ENCODE measurements at regions of chr5 and their contacts with region 1.

Region 1: DNA sequence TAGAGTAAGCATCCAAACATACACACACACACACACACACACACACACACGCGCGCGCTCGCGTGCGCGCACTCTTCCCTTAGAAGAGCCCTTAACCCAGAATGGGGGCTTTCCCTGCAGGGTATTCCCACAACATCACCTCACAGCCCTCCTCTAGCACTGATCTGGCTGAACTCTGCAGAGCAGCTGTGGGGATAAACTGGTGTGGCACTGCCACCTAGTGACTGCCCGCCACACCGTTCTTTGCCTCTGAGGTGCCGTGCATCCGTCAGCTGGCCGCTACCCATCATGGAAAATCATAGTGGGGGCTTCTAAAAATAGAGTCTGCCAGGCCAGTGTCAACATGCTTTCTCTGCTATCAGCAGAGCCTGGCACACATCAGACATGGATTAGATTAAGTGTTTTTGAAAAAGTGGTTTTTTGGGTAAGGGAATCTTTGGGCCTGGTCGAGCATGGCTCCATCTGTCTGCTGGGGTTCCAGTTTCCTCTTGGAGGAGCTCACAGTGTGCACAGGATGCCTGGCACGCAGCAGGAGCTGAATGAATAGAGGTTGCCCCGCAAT is 88.1 kb downstream of the KCNN2 start:
- DNase-seq: peak; percentile 61 to 79
- ATAC-seq: peak; percentile 89 to 99 (median 98)
- H3K4me3 ChIP-seq: peak overlapping the region; percentile 35
- H3K27ac ChIP-seq: no peak overlapping the region
- H3K4me1 ChIP-seq: no peaks in the 10 kb centered on the region
- H3K27me3 ChIP-seq: no peaks in the 10 kb centered on the region
- CTCF ChIP-seq: peak; percentile 85

Region 2: GRCh38 chr5:113612060-113612496 is 837.9 kb before region 1 on chr5:
- intact Hi-C with region 1: loop called (anchors 5 to 10 kb)
- DNase-seq: no peak
- ATAC-seq: peak in 3 of 4 donors; percentile 49 to 80 (median 58)
- H3K4me3 ChIP-seq: no peak overlapping the region
- H3K27ac ChIP-seq: no peak overlapping the region
- H3K4me1 ChIP-seq: no peaks in the 10 kb centered on the region
- H3K27me3 ChIP-seq: peaks cover 0 to 5% (median 0%) of the 10 kb centered on the region in 3 donors
- CTCF ChIP-seq: peak; percentile 65

Region 3: GRCh38 chr5:113678924-113679575 is 770.9 kb before region 1 on chr5:
- intact Hi-C with region 1: loop called in 1 of 2 experiments (anchors 2 kb)
- DNase-seq: no peak
- ATAC-seq: peak; percentile 48 to 74 (median 55)
- H3K4me3 ChIP-seq: no peak overlapping the region
- H3K27ac ChIP-seq: no peak overlapping the region
- H3K4me1 ChIP-seq: no peaks in the 10 kb centered on the region
- H3K27me3 ChIP-seq: no peaks in the 10 kb centered on the region
- CTCF ChIP-seq: peak; percentile 68

Region 4: GRCh38 chr5:113692891-113693457 is 757.0 kb before region 1 on chr5:
- intact Hi-C with region 1: no loop called
- DNase-seq: no peak
- ATAC-seq: no peak
- H3K4me3 ChIP-seq: no peak overlapping the region
- H3K27ac ChIP-seq: no peak overlapping the region
- H3K4me1 ChIP-seq: no peaks in the 10 kb centered on the region
- H3K27me3 ChIP-seq: peaks cover 0 to 20% (median 4%) of the 10 kb centered on the region in 3 donors
- CTCF ChIP-seq: no peak

Region 5: GRCh38 chr5:114018186-114018585 is 431.8 kb before region 1 on chr5:
- intact Hi-C with region 1: loop called (anchors 1 to 5 kb)
- DNase-seq: no peak
- ATAC-seq: peak in 2 of 4 donors; percentile 55 to 77
- H3K4me3 ChIP-seq: no peak overlapping the region
- H3K27ac ChIP-seq: no peak overlapping the region
- H3K4me1 ChIP-seq: no peaks in the 10 kb centered on the region
- H3K27me3 ChIP-seq: peaks cover 0 to 2% (median 0%) of the 10 kb centered on the region in 3 donors
- CTCF ChIP-seq: peak; percentile 57

Region 6: GRCh38 chr5:114097570-114097969 is 352.4 kb before region 1 on chr5:
- intact Hi-C with region 1: loop called (anchors 2 to 10 kb)
- DNase-seq: no peak
- ATAC-seq: no peak
- H3K4me3 ChIP-seq: no peak overlapping the region
- H3K27ac ChIP-seq: no peak overlapping the region
- H3K4me1 ChIP-seq: no peaks in the 10 kb centered on the region
- H3K27me3 ChIP-seq: no peaks in the 10 kb centered on the region
- CTCF ChIP-seq: no peak

Region 7: GRCh38 chr5:114311968-114312367 is 138.0 kb before region 1 on chr5:
- intact Hi-C with region 1: loop called in 1 of 2 experiments (anchors 5 kb)
- DNase-seq: no peak
- ATAC-seq: no peak
- H3K4me3 ChIP-seq: no peak overlapping the region
- H3K27ac ChIP-seq: no peak overlapping the region
- H3K4me1 ChIP-seq: no peaks in the 10 kb centered on the region
- H3K27me3 ChIP-seq: no peaks in the 10 kb centered on the region
- CTCF ChIP-seq: no peak

Region 8: GRCh38 chr5:114361724-114362196 is 88.2 kb before region 1 on chr5 and contains the start of gene KCNN2:
- intact Hi-C with region 1: loop called in 1 of 2 experiments (anchors 2 kb)
- DNase-seq: peak; percentile 77 to 90
- ATAC-seq: peak; percentile 92 to 98 (median 96)
- H3K4me3 ChIP-seq: peak within 1 kb of the TSS; percentile 86
- H3K27ac ChIP-seq: peak within 1 kb of the TSS; percentile 58
- H3K4me1 ChIP-seq: peaks cover 5% of the 10 kb centered on the region
- H3K27me3 ChIP-seq: peaks cover 3 to 20% (median 6%) of the 10 kb centered on the region in 3 donors
- CTCF ChIP-seq: no peak
- total RNA-seq, gene KCNN2: 0.59 to 2.9 (median 1.3) TPM

Region 9: GRCh38 chr5:114500756-114501155 is 50.8 kb after region 1 on chr5:
- intact Hi-C with region 1: no loop called
- DNase-seq: no peak
- ATAC-seq: no peak
- H3K4me3 ChIP-seq: no peak overlapping the region
- H3K27ac ChIP-seq: no peak overlapping the region
- H3K4me1 ChIP-seq: no peaks in the 10 kb centered on the region
- H3K27me3 ChIP-seq: no peaks in the 10 kb centered on the region
- CTCF ChIP-seq: no peak

Region 10: GRCh38 chr5:114612406-114612805 is 162.5 kb after region 1 on chr5:
- intact Hi-C with region 1: no loop called
- DNase-seq: no peak
- ATAC-seq: no peak
- H3K4me3 ChIP-seq: no peak overlapping the region
- H3K27ac ChIP-seq: no peak overlapping the region
- H3K4me1 ChIP-seq: no peaks in the 10 kb centered on the region
- H3K27me3 ChIP-seq: no peaks in the 10 kb centered on the region
- CTCF ChIP-seq: no peak